Endothelial cell of umbilical vein (primary cell): ENCODE measurements at regions of chr1 and their contacts with region 1.

Region 1: GRCh38 chr1:202760589-202760988 is 47.6 kb downstream of the KDM5B start:
- DNase-seq: no peak
- H3K4me3 ChIP-seq: no peak overlapping the region
- H3K27ac ChIP-seq: no peak overlapping the region
- H3K4me1 ChIP-seq: no peaks in the 10 kb centered on the region
- H3K27me3 ChIP-seq: no peaks in the 10 kb centered on the region
- CTCF ChIP-seq: no peak
- POLR2A ChIP-seq: no peak

Region 2: DNA sequence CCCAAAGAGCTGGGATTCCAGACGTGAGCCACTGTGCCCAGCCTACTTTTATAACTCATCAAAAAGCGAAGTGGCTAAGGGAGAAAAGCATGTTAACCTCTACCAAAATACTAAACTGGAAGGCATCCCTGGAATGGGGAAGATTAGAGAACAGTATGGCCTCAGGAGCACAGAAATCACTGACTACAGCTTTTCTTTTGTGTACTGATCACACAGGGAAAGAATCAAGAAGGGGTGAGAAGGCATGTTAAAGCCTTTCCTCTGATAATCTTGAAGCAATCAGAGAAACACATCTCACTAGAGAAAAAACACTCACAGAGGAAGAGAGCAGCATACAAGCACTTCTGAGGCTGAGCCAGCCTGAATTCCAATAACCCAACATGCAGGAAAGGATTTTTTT is 60.9 kb after region 1 on chr1:
- CTCF ChIA-PET with region 1: no interaction called
- POLR2A ChIA-PET with region 1: no interaction called
- dilution Hi-C with region 1: no loop called
- intact Hi-C with region 1: no loop called
- DNase-seq: no peak
- H3K4me3 ChIP-seq: no peak overlapping the region
- H3K27ac ChIP-seq: no peak overlapping the region
- H3K4me1 ChIP-seq: no peaks in the 10 kb centered on the region
- H3K27me3 ChIP-seq: peaks cover 3 to 15% of the 10 kb centered on the region in 2 experiments
- CTCF ChIP-seq: no peak
- POLR2A ChIP-seq: no peak

Region 3: GRCh38 chr1:202852163-202852904 is 91.7 kb after region 1 on chr1:
- CTCF ChIA-PET with region 1: interaction called, 3 read pairs
- POLR2A ChIA-PET with region 1: no interaction called
- dilution Hi-C with region 1: no loop called
- intact Hi-C with region 1: loop called (anchors 2 kb)
- DNase-seq: peak; percentile 70
- H3K4me3 ChIP-seq: no peak overlapping the region
- H3K27ac ChIP-seq: no peak overlapping the region
- H3K4me1 ChIP-seq: no peaks in the 10 kb centered on the region
- H3K27me3 ChIP-seq: no peaks in the 10 kb centered on the region
- CTCF ChIP-seq: peak; percentile 60 to 76
- POLR2A ChIP-seq: no peak

Region 4: GRCh38 chr1:202998836-202999750 is 238.5 kb after region 1 on chr1:
- CTCF ChIA-PET with region 1: no interaction called
- POLR2A ChIA-PET with region 1: no interaction called
- dilution Hi-C with region 1: no loop called
- intact Hi-C with region 1: loop called (anchors 5 kb)
- DNase-seq: peak; percentile 69
- H3K4me3 ChIP-seq: no peak overlapping the region
- H3K27ac ChIP-seq: no peak overlapping the region
- H3K4me1 ChIP-seq: peaks cover 5% of the 10 kb centered on the region
- H3K27me3 ChIP-seq: peaks cover 16 to 27% of the 10 kb centered on the region in 2 experiments
- CTCF ChIP-seq: peak; percentile 66 to 72
- POLR2A ChIP-seq: no peak